ENCODE measurements at regions of chr15 and their contacts with region 1.

Region 1: DNA sequence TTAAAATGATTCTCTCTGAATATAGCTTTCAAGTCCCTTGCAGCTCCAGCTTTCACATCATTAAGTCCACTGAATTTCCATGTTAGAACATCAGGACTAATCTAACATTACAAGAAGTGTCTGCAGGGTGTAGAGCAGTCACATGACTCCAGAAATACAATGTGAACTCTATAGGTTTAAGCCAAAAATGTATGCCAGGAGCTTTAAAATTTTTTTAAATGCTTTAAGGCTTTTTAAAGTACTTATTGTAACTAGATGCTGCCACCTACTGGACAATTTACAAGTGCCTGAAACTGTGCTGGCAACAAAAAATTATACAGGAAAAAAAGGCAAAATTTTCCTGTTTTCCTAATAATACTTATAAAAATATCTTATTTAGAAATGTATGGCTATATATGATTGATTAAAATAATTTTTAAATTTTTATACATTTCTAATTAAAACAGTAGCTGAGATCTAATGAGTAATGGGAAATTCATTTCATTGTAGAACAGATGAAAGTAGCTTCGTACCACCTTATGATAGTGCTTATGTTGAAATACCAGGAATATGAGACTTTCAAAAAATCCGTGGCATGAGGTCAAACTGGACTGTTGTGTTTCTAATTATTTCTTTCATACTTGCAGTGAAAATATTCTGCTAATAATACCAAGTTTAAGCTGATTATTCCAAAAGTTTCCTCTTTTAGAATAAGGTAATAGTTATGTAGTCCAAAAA is 25.7 kb downstream of the FSIP1 start:
- DNase-seq: peak; percentile 74
- H3K4me3 ChIP-seq: no peak overlapping the region
- H3K27ac ChIP-seq: no peak overlapping the region
- H3K4me1 ChIP-seq: no peaks in the 10 kb centered on the region
- H3K27me3 ChIP-seq: no peaks in the 10 kb centered on the region
- CTCF ChIP-seq: peak; percentile 49 to 51
- POLR2A ChIP-seq: no peak

Region 2: GRCh38 chr15:38714309-38715072 is 1042.5 kb before region 1 on chr15:
- CTCF ChIA-PET with region 1: interaction called, 17 read pairs
- POLR2A ChIA-PET with region 1: no interaction called
- dilution Hi-C with region 1: no loop called
- intact Hi-C with region 1: loop called (anchors 5 kb)
- DNase-seq: peak; percentile 92
- H3K4me3 ChIP-seq: no peak overlapping the region
- H3K27ac ChIP-seq: no peak overlapping the region
- H3K4me1 ChIP-seq: peaks cover 9% of the 10 kb centered on the region
- H3K27me3 ChIP-seq: no peaks in the 10 kb centered on the region
- CTCF ChIP-seq: no peak
- POLR2A ChIP-seq: no peak

Region 3: DNA sequence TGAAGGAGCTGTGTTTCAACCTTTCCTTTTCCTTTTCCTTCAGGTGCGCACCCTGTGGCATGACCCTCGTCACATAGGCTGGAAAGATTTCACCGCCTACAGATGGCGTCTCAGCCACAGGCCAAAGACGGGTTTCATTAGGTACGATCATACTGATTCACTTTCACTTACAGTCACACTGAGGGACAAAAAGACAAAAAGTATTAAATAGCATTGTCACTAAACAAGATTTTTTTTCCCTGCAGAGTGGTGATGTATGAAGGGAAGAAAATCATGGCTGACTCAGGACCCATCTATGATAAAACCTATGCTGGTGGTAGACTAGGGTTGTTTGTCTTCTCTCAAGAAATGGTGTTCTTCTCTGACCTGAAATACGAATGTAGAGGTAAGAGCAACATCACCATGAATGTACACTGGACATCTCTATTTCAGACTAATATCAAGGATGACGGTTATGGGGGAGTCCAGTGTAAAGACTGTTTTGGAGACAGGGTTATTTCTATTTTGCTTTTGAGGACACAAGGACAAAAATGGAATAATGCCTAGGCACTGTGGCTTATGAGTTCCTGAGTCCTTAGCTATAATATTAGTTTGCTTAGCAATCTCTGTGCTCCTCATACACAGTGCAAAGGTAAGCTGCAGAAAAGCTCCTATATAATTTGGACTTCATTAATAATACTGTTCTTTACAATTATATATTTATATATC is 162.8 kb before region 1 on chr15:
- CTCF ChIA-PET with region 1: interaction called, 379 read pairs
- POLR2A ChIA-PET with region 1: interaction called, 49 read pairs
- dilution Hi-C with region 1: no loop called
- intact Hi-C with region 1: loop called (anchors 1 kb)
- DNase-seq: peak; percentile 64
- H3K4me3 ChIP-seq: peak overlapping the region in 1 of 3 experiments; percentile 27
- H3K27ac ChIP-seq: no peak overlapping the region
- H3K4me1 ChIP-seq: no peaks in the 10 kb centered on the region
- H3K27me3 ChIP-seq: no peaks in the 10 kb centered on the region
- CTCF ChIP-seq: no peak
- POLR2A ChIP-seq: peak; percentile 96

Region 4: DNA sequence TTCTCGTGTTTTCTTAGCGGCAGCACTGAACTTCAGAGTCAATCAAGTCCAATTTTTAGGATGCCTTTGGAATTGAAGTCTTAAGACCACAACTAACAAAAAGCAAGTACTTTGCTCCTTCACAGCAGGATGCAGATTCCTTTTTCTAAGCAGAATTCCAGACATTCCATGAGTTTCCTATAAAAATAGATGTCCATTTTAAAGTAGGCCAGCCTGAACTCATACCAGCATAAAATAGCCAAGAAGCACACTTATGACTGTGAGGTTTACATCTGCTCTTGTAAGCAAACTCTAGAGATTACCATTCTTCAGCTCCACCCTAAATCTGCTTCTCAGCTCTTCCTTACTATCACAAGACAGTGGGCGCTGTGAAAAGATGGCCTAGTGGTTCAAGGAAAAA is 90.3 kb before region 1 on chr15:
- CTCF ChIA-PET with region 1: interaction called, 23 read pairs
- POLR2A ChIA-PET with region 1: no interaction called
- dilution Hi-C with region 1: no loop called
- intact Hi-C with region 1: no loop called
- DNase-seq: peak; percentile 53
- H3K4me3 ChIP-seq: no peak overlapping the region
- H3K27ac ChIP-seq: peak overlapping the region; percentile 2
- H3K4me1 ChIP-seq: peaks cover 17% of the 10 kb centered on the region
- H3K27me3 ChIP-seq: no peaks in the 10 kb centered on the region
- CTCF ChIP-seq: no peak
- POLR2A ChIP-seq: no peak

Region 5: DNA sequence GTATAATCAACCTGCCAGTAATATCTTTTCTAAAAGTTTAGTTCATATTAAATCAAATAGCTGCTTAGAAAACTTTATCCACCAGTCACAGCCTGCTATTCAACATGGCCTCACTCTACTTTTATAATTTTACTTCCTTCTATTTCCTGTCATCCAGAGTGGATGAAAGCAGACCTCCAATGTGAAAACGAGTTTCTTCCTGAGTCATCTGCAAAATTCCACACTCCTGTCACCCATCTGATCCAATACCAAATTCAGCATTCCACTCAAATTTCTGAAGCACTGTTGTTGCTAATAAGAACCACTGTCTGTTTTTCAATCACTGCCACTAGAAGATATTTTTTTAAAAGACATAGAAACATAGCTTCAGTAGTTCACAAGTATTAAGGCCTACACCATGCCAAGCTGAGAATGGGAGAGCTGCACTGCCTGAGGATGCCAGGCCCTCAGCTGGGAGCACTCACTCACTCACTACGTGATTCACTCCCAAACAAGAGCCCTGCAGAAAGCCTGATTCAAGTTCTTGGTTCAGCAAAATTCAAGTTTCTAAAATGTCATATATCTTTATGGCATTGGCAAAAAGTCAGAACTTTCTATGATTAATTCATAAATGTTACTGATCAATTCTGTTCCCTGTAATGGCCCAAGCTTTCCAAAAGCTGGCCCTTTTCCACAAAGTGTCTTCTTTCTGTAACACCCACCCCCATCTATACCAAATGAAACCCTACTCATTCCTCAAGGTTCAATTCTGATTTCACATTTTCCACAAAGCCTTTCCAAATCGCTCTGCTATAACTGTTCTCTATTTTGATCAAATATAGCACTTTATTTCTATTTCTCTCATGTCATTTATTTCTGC is 57.2 kb before region 1 on chr15:
- CTCF ChIA-PET with region 1: interaction called, 10 read pairs
- POLR2A ChIA-PET with region 1: no interaction called
- dilution Hi-C with region 1: no loop called
- intact Hi-C with region 1: no loop called
- DNase-seq: no peak
- H3K4me3 ChIP-seq: no peak overlapping the region
- H3K27ac ChIP-seq: no peak overlapping the region
- H3K4me1 ChIP-seq: no peaks in the 10 kb centered on the region
- H3K27me3 ChIP-seq: no peaks in the 10 kb centered on the region
- CTCF ChIP-seq: no peak
- POLR2A ChIP-seq: no peak

Region 6: DNA sequence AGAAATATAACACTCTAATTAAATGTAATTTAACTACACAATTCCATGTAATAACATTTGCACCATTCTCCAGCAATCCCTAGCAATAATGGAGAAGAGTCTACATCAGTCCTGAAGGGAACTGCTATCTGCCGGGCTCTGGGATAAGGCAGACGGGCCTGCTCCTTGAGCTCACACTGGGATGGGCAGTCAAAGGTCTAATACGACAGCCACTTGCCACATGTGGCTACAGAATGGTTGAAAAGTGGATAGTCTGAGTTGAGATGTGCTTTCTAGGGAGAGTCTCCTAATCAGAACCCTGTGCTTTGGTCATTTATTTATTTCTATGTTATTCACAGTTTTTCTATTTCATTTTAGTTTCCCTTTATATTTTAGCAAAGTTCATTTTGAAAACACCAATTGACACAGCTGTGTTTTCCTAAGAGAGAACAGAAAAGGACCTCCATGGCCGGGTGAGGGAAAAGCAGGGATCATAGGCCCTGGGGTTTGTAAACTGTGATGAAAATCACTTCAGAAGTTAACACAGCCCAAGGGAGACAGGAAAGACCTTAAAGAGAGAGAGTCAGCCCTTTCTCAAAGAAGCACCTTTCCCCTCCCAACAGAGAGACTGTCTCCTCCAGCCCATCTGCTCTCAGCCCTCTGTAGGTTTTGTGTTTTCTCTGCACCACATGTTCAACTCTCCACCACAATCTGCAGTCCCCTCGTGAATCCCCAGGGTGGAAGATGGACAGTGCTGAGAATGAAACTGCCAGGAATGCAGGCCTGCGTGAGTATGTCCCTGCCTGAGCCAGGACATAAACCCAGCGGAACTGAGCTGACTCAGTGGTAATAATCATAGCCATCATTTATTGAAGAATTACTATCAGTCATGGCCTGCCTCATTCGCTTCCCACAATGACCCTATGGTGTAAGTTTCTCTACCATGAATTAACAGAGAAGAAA is 14.1 kb after region 1 on chr15:
- CTCF ChIA-PET with region 1: interaction called, 37 read pairs
- POLR2A ChIA-PET with region 1: no interaction called
- dilution Hi-C with region 1: no loop called
- intact Hi-C with region 1: no loop called
- DNase-seq: no peak
- H3K4me3 ChIP-seq: no peak overlapping the region
- H3K27ac ChIP-seq: no peak overlapping the region
- H3K4me1 ChIP-seq: no peaks in the 10 kb centered on the region
- H3K27me3 ChIP-seq: no peaks in the 10 kb centered on the region
- CTCF ChIP-seq: no peak
- POLR2A ChIP-seq: no peak

Region 7: GRCh38 chr15:39946862-39947261 is 189.9 kb after region 1 on chr15:
- CTCF ChIA-PET with region 1: no interaction called
- POLR2A ChIA-PET with region 1: no interaction called
- dilution Hi-C with region 1: no loop called
- intact Hi-C with region 1: no loop called
- DNase-seq: no peak
- H3K4me3 ChIP-seq: no peak overlapping the region
- H3K27ac ChIP-seq: no peak overlapping the region
- H3K4me1 ChIP-seq: no peaks in the 10 kb centered on the region
- H3K27me3 ChIP-seq: no peaks in the 10 kb centered on the region
- CTCF ChIP-seq: no peak
- POLR2A ChIP-seq: no peak

Region 8: GRCh38 chr15:40550341-40551037 is 793.5 kb after region 1 on chr15:
- CTCF ChIA-PET with region 1: no interaction called
- POLR2A ChIA-PET with region 1: no interaction called
- dilution Hi-C with region 1: no loop called
- intact Hi-C with region 1: no loop called
- DNase-seq: no peak
- H3K4me3 ChIP-seq: no peak overlapping the region
- H3K27ac ChIP-seq: no peak overlapping the region
- H3K4me1 ChIP-seq: no peaks in the 10 kb centered on the region
- H3K27me3 ChIP-seq: no peaks in the 10 kb centered on the region
- CTCF ChIP-seq: no peak
- POLR2A ChIP-seq: no peak

Measured in endothelial cell of umbilical vein (primary cell).